CD14-positive monocyte (primary cell): ENCODE measurements at regions of chr17 and their contacts with region 1.

Region 1: GRCh38 chr17:36601303-36602029 is at the start of gene MRM1:
- DNase-seq: peak; percentile 86 to 90 (median 87)
- H3K4me3 ChIP-seq: peak within 1 kb of the TSS; percentile 72 to 98 (median 91)
- H3K4me3 Mint-ChIP-seq: peak within 1 kb of the TSS; percentile 91 to 93
- H3K27ac ChIP-seq: peak within 1 kb of the TSS; percentile 61 to 88
- H3K27ac Mint-ChIP-seq: peak within 1 kb of the TSS; percentile 82 to 92 (median 88)
- H3K4me1 ChIP-seq: peaks cover 18 to 24% of the 10 kb centered on the region in 2 donors
- H3K4me1 Mint-ChIP-seq: peaks cover 39% of the 10 kb centered on the region
- H3K27me3 ChIP-seq: no peaks in the 10 kb centered on the region
- H3K27me3 Mint-ChIP-seq: no peaks in the 10 kb centered on the region
- CTCF ChIP-seq: no peak
- polyA plus RNA-seq, gene MRM1: 0.82 to 2.3 (median 1.5) TPM

Region 2: DNA sequence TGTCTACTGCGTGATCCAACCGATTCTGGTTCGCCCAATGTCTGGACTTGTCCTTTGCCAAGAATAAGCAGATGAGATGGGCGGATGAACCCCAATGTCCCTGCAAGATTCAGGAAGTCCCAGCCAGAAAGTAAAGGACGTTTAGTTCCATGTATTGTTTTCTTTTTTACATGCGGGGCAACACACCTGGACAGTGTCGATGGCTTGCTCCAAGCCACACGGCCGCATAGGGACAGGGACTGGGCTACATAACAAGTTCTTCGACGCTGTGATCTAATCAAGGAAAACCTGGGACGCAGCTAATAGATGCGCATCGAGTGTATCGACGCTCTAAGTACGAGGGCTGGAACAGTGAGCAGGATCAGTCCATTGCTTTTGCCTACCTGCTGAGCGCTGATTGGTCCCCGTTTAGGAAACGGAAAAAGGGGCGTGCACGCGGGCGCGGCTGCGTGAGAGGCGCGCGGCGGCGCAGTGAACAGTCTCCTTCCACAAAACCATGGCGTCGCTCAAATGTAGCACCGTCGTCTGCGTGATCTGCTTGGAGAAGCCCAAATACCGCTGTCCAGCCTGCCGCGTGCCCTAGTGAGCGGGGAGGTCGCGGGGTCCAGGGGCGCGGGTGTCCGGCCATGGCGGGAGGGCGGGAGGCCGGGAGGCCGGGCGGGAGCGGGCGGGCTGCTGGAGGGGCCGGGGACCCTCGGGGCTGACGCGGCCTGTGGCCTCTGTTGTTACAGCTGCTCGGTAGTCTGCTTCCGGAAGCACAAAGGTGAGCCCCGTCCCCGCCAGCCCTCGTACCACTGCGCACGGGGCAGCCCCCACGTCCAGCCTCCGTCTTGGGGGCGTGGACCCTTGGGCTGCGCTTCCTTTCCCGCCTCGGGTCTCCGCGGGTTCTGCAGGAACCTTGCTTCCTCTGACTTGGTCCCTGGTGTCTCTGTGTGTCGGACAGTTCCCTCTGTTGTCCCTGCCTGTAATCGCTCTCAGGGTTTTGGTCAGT is 115.0 kb before region 1 on chr17 and contains the start of gene ZNHIT3:
- intact Hi-C with region 1: no loop called
- DNase-seq: peak; percentile 80 to 86 (median 86)
- H3K4me3 ChIP-seq: peak within 1 kb of the TSS; percentile 83 to 86 (median 85)
- H3K4me3 Mint-ChIP-seq: peak within 1 kb of the TSS; percentile 98 to 99
- H3K27ac ChIP-seq: peak within 1 kb of the TSS; percentile 45 to 73
- H3K27ac Mint-ChIP-seq: peak within 1 kb of the TSS; percentile 71 to 95 (median 93)
- H3K4me1 ChIP-seq: peaks cover 24 to 32% of the 10 kb centered on the region in 2 donors
- H3K4me1 Mint-ChIP-seq: peaks cover 28% of the 10 kb centered on the region
- H3K27me3 ChIP-seq: peaks cover 6 to 15% of the 10 kb centered on the region in 2 donors
- H3K27me3 Mint-ChIP-seq: peaks cover 12 to 23% (median 14%) of the 10 kb centered on the region in 3 donors
- CTCF ChIP-seq: no peak
- polyA plus RNA-seq, gene ZNHIT3: 27.6 to 70.4 (median 63.5) TPM

Region 3: GRCh38 chr17:36534840-36535668 is 66.4 kb before region 1 on chr17 and contains the starts of genes MYO19 and PIGW:
- intact Hi-C with region 1: no loop called
- DNase-seq: peak; percentile 86 to 89 (median 87)
- H3K4me3 ChIP-seq: peak within 1 kb of the TSS; percentile 71 to 99 (median 97)
- H3K4me3 Mint-ChIP-seq: peak within 1 kb of the TSS; percentile 95 to 96
- H3K27ac ChIP-seq: peak within 1 kb of the TSS; percentile 97 to 98
- H3K27ac Mint-ChIP-seq: peak within 1 kb of the TSS; percentile 94 to 99 (median 98)
- H3K4me1 ChIP-seq: peaks cover 15 to 20% of the 10 kb centered on the region in 2 donors
- H3K4me1 Mint-ChIP-seq: peaks cover 18% of the 10 kb centered on the region
- H3K27me3 ChIP-seq: no peaks in the 10 kb centered on the region
- H3K27me3 Mint-ChIP-seq: peaks cover 0 to 2% (median 0%) of the 10 kb centered on the region in 3 donors
- CTCF ChIP-seq: no peak
- polyA plus RNA-seq, gene MYO19: 1.2 to 51.3 (median 1.9) TPM
- polyA plus RNA-seq, gene PIGW: 3.1 to 5.9 (median 3.7) TPM

Region 4: DNA sequence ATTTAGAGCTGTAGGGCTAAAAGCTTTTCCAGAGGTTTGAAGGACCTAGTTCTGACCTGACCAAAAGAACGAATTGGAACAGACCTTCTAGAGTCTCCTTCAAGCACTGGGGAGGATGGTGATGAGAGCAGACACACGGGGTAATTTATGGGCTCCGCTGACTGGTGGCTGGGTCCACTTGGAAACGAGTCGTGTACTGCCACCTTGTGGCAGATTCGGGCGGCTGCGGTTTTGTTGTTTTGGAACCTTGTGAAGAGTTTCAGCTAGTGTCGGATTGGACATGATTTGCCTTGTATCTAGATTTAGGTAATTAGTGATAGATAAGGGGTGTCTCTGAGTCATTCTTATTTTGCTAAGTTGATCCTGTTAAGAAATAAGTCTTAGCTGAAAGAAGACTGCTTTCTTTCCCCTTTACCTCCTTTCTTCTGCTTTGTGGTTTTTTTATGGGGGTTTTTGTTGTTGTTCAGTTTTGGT is 446.2 kb after region 1 on chr17:
- intact Hi-C with region 1: loop called (anchors 5 kb)
- DNase-seq: peak; percentile 50 to 66 (median 57)
- H3K4me3 ChIP-seq: no peak overlapping the region
- H3K4me3 Mint-ChIP-seq: no peak overlapping the region
- H3K27ac ChIP-seq: no peak overlapping the region
- H3K27ac Mint-ChIP-seq: peak overlapping the region in 2 of 7 donors; percentile 28 to 55
- H3K4me1 ChIP-seq: no peaks in the 10 kb centered on the region
- H3K4me1 Mint-ChIP-seq: peaks cover 3% of the 10 kb centered on the region
- H3K27me3 ChIP-seq: no peaks in the 10 kb centered on the region
- H3K27me3 Mint-ChIP-seq: no peaks in the 10 kb centered on the region
- CTCF ChIP-seq: peak; percentile 76